H1 (cell line): ENCODE measurements at regions of chr6 and their contacts with region 1.

Region 1: DNA sequence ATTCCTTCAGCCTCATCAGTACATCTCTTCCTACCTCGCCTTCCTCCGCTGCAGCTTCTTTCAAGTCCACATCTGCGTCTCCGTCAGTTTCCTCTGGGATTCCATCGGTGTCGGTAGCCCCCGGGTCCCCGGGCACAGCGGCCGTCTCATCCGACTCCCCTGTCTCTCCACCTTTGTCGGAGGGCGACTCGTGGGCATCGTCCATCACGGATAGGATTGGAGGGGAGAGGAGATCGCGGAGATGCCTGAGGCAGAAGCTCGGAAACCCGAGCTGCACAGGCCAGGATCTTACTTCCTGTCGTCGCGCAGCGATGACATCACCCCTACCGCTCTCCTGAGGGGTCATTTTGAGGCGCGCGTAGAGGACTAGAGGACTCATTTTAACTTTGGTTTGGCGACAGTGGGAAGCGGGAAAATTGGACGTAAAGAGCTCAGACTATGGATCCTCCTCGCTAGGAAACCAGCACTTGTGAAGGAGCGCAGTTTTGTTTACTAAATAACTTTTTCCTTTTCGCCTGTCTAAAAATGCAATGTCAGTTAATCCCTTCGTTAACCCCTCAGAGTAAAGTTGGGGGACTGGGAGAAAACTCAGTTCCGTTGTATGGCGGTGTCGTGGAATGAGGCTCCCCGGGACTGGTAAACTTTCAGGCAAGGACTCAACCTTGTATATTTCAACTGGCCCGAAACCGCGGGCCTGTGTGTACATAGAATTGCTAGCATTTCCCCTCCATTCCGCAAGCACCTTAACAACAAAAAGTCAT is at the start of gene TAF11:
- DNase-seq: peak; percentile 73 to 93
- H3K4me3 ChIP-seq: peak within 1 kb of the TSS; percentile 74 to 98 (median 94)
- H3K27ac ChIP-seq: peak within 1 kb of the TSS; percentile 80
- H3K4me1 ChIP-seq: no peaks in the 10 kb centered on the region; a peak in 2 of 7 replicates
- H3K27me3 ChIP-seq: no peaks in the 10 kb centered on the region
- CTCF ChIP-seq: no peak
- EP300 ChIP-seq: 0 out of 3 replicates have a peak, but pooled peaks of 1 of the 2 experiments have one; percentile 51
- POLR2A ChIP-seq: peak; percentile 95 to 96
- RAD21 ChIP-seq: no peak; a peak in 1 of 4 replicates
- total RNA-seq, gene TAF11: 45.8 and 48.6 TPM in 2 replicates

Region 2: DNA sequence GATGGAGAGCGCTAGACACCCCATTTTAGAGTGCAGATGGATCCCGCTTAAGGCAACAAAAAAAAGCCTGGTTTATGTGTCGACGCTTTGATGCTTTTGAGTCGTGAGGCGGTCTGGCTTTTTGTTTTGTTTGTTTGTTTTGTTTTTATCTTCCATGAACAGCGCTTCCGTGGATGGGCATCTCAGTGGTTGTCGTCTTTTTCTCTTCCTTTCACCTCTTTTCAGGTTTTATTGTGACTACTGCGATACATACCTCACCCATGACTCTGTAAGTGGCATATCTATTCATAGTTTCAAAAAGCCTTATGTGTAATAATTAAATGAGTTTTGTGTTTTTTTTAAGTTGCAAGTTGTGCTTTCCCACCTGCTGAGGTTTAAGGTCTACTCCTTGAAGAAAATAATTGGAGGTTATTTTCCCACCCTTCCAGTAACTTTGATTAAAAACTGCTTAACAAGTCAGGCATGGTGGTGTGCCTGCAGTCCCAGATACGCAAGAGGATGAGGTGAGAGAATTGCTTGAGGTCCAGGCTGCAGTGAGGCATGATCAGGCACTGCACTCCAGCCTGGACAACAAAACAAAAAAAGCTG is 130.2 kb before region 1 on chr6:
- CTCF ChIA-PET with region 1: interaction called, 3 read pairs
- POLR2A ChIA-PET with region 1: interaction called, 14 read pairs
- DNase-seq: no peak
- H3K4me3 ChIP-seq: peak overlapping the region; percentile 81 to 98 (median 95)
- H3K27ac ChIP-seq: peak overlapping the region; percentile 92
- H3K4me1 ChIP-seq: no peaks in the 10 kb centered on the region
- H3K27me3 ChIP-seq: no peaks in the 10 kb centered on the region
- CTCF ChIP-seq: no peak
- EP300 ChIP-seq: no peak
- POLR2A ChIP-seq: no peak; a peak in 1 of 3 replicates
- RAD21 ChIP-seq: no peak

Region 3: GRCh38 chr6:34791701-34792235 is 96.2 kb before region 1 on chr6 and contains the start of gene BLTP3A:
- CTCF ChIA-PET with region 1: no interaction called
- POLR2A ChIA-PET with region 1: interaction called, 21 read pairs
- DNase-seq: peak; percentile 17 to 75
- H3K4me3 ChIP-seq: peak within 1 kb of the TSS; percentile 81 to 87 (median 84)
- H3K27ac ChIP-seq: peak within 1 kb of the TSS; percentile 35; the same call in 1 of the 2 replicates
- H3K4me1 ChIP-seq: peaks cover 0 to 2% (median under 1%) of the 10 kb centered on the region in 4 experiments; a peak in 2 of 7 replicates
- H3K27me3 ChIP-seq: no peaks in the 10 kb centered on the region
- CTCF ChIP-seq: no peak
- EP300 ChIP-seq: no peak
- POLR2A ChIP-seq: peak; percentile 63 to 78
- RAD21 ChIP-seq: no peak; a peak in 1 of 4 replicates
- total RNA-seq, gene BLTP3A: 17.2 and 18.5 TPM in 2 replicates

Region 4: GRCh38 chr6:34839666-34840352 is 48.1 kb before region 1 on chr6:
- CTCF ChIA-PET with region 1: no interaction called
- POLR2A ChIA-PET with region 1: no interaction called
- DNase-seq: no peak
- H3K4me3 ChIP-seq: no peak overlapping the region
- H3K27ac ChIP-seq: peak overlapping the region; percentile 53; the same call in 1 of the 2 replicates
- H3K4me1 ChIP-seq: no peaks in the 10 kb centered on the region
- H3K27me3 ChIP-seq: no peaks in the 10 kb centered on the region
- CTCF ChIP-seq: no peak
- EP300 ChIP-seq: no peak
- POLR2A ChIP-seq: no peak
- RAD21 ChIP-seq: no peak

Region 5: DNA sequence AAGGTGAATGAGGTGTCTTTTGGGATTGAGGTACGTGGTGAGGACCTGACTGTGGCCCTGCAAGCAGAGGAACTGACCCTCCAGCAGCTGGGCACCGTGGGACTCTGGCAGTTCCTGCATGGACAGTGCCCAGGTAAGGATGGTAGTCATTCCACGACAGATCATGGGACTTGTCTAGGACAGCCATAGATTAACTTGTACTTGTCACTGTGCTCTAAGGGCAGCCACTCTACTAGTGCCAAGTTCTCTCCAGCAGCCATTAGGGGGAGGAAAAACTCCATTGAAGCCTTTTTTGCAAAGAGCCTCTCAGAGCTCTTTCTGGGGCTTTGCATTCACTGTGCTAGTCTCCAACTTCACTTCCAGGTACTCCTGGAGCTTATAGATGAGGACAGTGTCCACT is 20.4 kb before region 1 on chr6:
- CTCF ChIA-PET with region 1: interaction called, 3 read pairs
- POLR2A ChIA-PET with region 1: interaction called, 12 read pairs
- DNase-seq: no peak
- H3K4me3 ChIP-seq: no peak overlapping the region
- H3K27ac ChIP-seq: no peak overlapping the region
- H3K4me1 ChIP-seq: no peaks in the 10 kb centered on the region
- H3K27me3 ChIP-seq: no peaks in the 10 kb centered on the region
- CTCF ChIP-seq: peak in 2 of 3 experiments; percentile 8 to 20; a peak in 2 of 4 replicates
- EP300 ChIP-seq: no peak
- POLR2A ChIP-seq: no peak
- RAD21 ChIP-seq: peak; percentile 35 to 48; a peak in 3 of 4 replicates

Region 6: DNA sequence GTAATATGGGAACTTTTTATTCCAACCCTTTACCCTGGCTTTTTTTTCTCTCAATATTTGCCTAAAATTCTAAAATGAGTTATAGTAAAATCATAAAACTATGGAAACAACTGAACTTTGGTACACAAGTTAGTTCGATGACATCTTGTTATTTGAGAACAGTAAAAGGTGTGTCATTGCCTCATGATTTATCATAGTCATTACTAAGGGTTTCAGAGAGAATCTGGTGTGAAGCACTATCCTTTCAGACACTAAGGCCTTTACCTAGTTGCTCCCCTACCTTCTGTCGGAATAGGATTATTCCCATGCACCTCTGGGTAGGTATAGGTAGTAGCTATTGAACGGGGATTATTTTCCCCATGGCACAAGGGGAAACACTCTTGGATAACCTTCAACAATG is 11.5 kb before region 1 on chr6:
- CTCF ChIA-PET with region 1: interaction called, 3 read pairs
- POLR2A ChIA-PET with region 1: interaction called, 48 read pairs
- DNase-seq: no peak
- H3K4me3 ChIP-seq: no peak overlapping the region
- H3K27ac ChIP-seq: no peak overlapping the region
- H3K4me1 ChIP-seq: peaks cover 0 to 7% (median 0%) of the 10 kb centered on the region in 4 experiments; a peak in 1 of 7 replicates
- H3K27me3 ChIP-seq: no peaks in the 10 kb centered on the region
- CTCF ChIP-seq: no peak
- EP300 ChIP-seq: no peak
- POLR2A ChIP-seq: no peak
- RAD21 ChIP-seq: no peak

Region 7: DNA sequence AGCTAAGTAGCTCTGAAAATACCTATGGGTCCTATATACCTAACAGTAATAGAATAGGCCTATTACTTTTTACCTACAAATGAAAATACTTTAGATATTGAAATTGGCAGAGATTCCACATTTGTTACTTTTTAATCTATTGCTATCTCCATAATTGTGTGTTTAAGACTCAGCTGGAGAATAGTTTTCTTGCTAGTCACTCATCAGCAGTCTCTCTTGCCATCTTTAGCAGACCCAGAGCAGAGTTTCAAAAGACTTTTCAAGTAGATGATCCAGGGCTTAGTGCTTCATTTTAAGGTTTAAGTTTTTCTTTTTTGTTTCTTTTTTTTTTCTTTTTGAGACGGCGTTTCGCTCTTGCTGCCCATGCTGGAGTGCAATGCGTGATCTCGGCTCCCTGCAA is 14.0 kb after region 1 on chr6:
- CTCF ChIA-PET with region 1: interaction called, 4 read pairs
- POLR2A ChIA-PET with region 1: interaction called, 34 read pairs
- DNase-seq: no peak
- H3K4me3 ChIP-seq: no peak overlapping the region
- H3K27ac ChIP-seq: no peak overlapping the region
- H3K4me1 ChIP-seq: no peaks in the 10 kb centered on the region; a peak in 1 of 7 replicates
- H3K27me3 ChIP-seq: no peaks in the 10 kb centered on the region
- CTCF ChIP-seq: no peak
- EP300 ChIP-seq: no peak
- POLR2A ChIP-seq: no peak
- RAD21 ChIP-seq: no peak

Region 8: DNA sequence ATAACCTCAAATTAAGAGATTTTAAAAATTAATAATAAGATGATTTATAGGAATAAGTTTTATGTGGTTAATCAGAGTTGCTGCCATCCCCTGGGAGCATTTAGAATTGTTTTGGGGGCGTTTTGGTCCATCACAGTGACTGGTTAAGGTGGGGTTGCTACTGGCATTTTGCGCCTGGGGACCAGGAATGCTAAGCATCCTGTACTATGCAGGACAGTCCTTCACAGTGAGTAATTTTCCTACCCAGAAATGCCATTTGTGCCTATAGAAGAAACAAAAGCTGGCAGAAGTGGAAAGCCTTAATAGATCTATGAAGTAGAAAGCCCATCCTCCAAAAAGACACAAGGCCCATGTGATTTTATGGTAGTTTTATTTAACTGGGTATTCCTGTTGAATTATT is 119.1 kb after region 1 on chr6:
- CTCF ChIA-PET with region 1: no interaction called
- POLR2A ChIA-PET with region 1: no interaction called
- DNase-seq: no peak
- H3K4me3 ChIP-seq: no peak overlapping the region
- H3K27ac ChIP-seq: no peak overlapping the region
- H3K4me1 ChIP-seq: no peaks in the 10 kb centered on the region
- H3K27me3 ChIP-seq: no peaks in the 10 kb centered on the region
- CTCF ChIP-seq: no peak
- EP300 ChIP-seq: no peak
- POLR2A ChIP-seq: no peak
- RAD21 ChIP-seq: no peak